Dendritic cell treated with granulocyte-macrophage colony-stimulating factor and Interleukin-4, amounts not matched to agents 40 ng/mL and 50 ng/mL, for 4 days (primary cell): ENCODE measurements at regions of chr2 and their contacts with region 1.

Region 1: DNA sequence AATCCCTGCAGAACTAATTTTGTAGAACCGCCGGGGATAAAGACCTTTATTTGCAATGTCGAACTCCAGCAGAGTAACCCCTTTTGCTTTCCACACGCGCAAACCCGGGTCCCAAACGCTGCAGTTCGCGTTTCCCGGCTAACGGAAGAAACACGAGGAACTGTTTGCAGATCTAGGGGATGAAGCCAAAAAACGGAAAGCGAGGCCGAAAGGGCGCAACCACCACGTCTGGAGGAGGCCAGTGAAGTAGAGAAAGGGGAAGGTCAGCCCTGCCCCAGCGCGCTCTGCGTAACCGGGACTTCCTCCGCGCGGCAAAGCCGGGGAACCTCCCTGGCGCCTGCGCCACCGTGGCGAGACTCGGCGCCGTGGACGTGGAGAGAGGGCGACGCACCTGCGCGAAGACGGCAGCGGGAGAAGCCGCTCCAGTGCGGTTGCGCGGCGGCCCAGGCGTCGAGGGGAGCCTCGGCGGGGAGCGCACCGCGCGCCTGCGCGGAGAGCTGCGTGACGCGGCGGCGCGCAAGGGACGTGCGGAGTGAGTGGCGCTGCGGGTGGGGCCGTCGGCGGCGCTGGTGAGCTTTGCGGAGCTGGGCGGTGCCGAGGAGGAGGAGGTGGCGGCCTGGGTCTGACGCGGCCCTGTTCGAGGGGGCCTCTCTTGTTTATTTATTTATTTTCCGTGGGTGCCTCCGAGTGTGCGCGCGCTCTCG is at the start of gene PPP1CB:
- H3K4me3 Mint-ChIP-seq: peak within 1 kb of the TSS; percentile 80
- H3K27ac Mint-ChIP-seq: peak within 1 kb of the TSS; percentile 99
- H3K4me1 Mint-ChIP-seq: peaks cover 52% of the 10 kb centered on the region
- H3K27me3 Mint-ChIP-seq: no peaks in the 10 kb centered on the region

Region 2: GRCh38 chr2:28346587-28346986 is 404.8 kb before region 1 on chr2:
- intact Hi-C with region 1: no loop called
- H3K4me3 Mint-ChIP-seq: no peak overlapping the region
- H3K27ac Mint-ChIP-seq: no peak overlapping the region
- H3K4me1 Mint-ChIP-seq: peaks cover 40% of the 10 kb centered on the region
- H3K27me3 Mint-ChIP-seq: peaks cover 14% of the 10 kb centered on the region

Region 3: GRCh38 chr2:28566521-28567041 is 184.8 kb before region 1 on chr2:
- intact Hi-C with region 1: loop called (anchors 2 kb)
- H3K4me3 Mint-ChIP-seq: peak overlapping the region; percentile 88
- H3K27ac Mint-ChIP-seq: peak overlapping the region; percentile 90
- H3K4me1 Mint-ChIP-seq: no peaks in the 10 kb centered on the region
- H3K27me3 Mint-ChIP-seq: no peaks in the 10 kb centered on the region

Region 4: DNA sequence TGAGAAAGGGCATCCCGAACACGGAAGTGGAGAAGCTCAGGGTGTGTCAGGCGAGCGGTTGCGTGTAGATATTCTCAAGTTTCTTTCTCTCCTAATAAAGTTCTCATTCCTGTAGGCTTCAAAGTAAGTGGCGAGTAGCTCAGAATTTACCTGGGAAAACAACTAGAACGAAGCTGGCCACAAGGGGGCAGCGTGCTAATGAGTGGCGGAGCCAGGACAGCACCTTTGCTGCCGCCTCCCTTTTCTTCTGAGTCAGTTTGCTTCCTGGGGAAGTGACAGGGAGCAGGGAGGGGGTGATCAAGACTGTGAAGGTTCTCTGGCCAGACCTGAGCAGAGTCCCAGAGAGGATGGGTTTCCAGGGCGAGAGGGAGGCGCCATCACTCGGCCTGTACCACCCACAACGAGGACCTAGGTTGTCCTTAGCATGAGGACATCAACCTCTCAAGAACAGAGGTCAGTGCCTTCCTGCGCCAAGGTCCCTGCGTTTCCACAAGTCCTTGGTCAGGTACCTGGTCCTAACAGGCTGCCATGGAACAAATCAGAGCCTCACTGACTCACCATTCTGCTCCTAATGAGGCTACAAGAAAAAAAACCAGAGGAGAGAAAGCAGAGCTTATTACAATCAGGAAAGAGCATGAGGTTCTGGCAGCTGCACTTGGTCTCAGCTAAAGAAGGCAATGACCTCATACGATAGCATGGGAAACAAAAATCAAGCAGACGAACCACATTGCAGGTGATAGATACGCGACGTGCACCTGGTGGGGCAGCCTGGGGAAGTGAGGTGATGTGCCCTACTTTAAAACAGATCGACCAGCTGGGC is 156.9 kb before region 1 on chr2:
- intact Hi-C with region 1: loop called (anchors 2 kb)
- H3K4me3 Mint-ChIP-seq: peak overlapping the region; percentile 32
- H3K27ac Mint-ChIP-seq: peak overlapping the region; percentile 71
- H3K4me1 Mint-ChIP-seq: peaks cover 24% of the 10 kb centered on the region
- H3K27me3 Mint-ChIP-seq: no peaks in the 10 kb centered on the region

Region 5: GRCh38 chr2:28601616-28602015 is 149.8 kb before region 1 on chr2:
- intact Hi-C with region 1: loop called (anchors 2 kb)
- H3K4me3 Mint-ChIP-seq: peak overlapping the region; percentile 60
- H3K27ac Mint-ChIP-seq: peak overlapping the region; percentile 84
- H3K4me1 Mint-ChIP-seq: peaks cover 47% of the 10 kb centered on the region
- H3K27me3 Mint-ChIP-seq: no peaks in the 10 kb centered on the region

Region 6: GRCh38 chr2:28621172-28622100 is 130.0 kb before region 1 on chr2:
- intact Hi-C with region 1: loop called (anchors 1 kb)
- H3K4me3 Mint-ChIP-seq: peak overlapping the region; percentile 30
- H3K27ac Mint-ChIP-seq: peak overlapping the region; percentile 61
- H3K4me1 Mint-ChIP-seq: peaks cover 74% of the 10 kb centered on the region
- H3K27me3 Mint-ChIP-seq: no peaks in the 10 kb centered on the region

Region 7: GRCh38 chr2:28716265-28716867 is 35.0 kb before region 1 on chr2:
- intact Hi-C with region 1: loop called (anchors 1 kb)
- H3K4me3 Mint-ChIP-seq: no peak overlapping the region
- H3K27ac Mint-ChIP-seq: peak overlapping the region; percentile 100
- H3K4me1 Mint-ChIP-seq: peaks cover 62% of the 10 kb centered on the region
- H3K27me3 Mint-ChIP-seq: no peaks in the 10 kb centered on the region